ENCODE measurements at regions of chr15 and their contacts with region 1.

Region 1: GRCh38 chr15:95025924-95026728 is 794.8 kb downstream of the MCTP2 start:
- DNase-seq: peak; percentile 42 to 48
- H3K4me3 ChIP-seq: no peak overlapping the region
- H3K4me3 Mint-ChIP-seq: no peak overlapping the region
- H3K27ac Mint-ChIP-seq: no peak overlapping the region
- H3K4me1 ChIP-seq: no peaks in the 10 kb centered on the region
- H3K4me1 Mint-ChIP-seq: no peaks in the 10 kb centered on the region
- H3K27me3 ChIP-seq: no peaks in the 10 kb centered on the region
- H3K27me3 Mint-ChIP-seq: peaks cover 5% of the 10 kb centered on the region
- CTCF ChIP-seq: peak in 1 of 2 experiments; percentile 47

Region 2: GRCh38 chr15:94582369-94582768 is 443.8 kb before region 1 on chr15:
- CTCF ChIA-PET with region 1: no interaction called
- POLR2A ChIA-PET with region 1: no interaction called
- intact Hi-C with region 1: loop called (anchors 10 kb)
- DNase-seq: peak; percentile 38 to 41
- H3K4me3 ChIP-seq: no peak overlapping the region
- H3K4me3 Mint-ChIP-seq: no peak overlapping the region
- H3K27ac Mint-ChIP-seq: no peak overlapping the region
- H3K4me1 ChIP-seq: no peaks in the 10 kb centered on the region
- H3K4me1 Mint-ChIP-seq: no peaks in the 10 kb centered on the region
- H3K27me3 ChIP-seq: no peaks in the 10 kb centered on the region
- H3K27me3 Mint-ChIP-seq: peaks cover 16% of the 10 kb centered on the region
- CTCF ChIP-seq: peak; percentile 35 to 51

Region 3: DNA sequence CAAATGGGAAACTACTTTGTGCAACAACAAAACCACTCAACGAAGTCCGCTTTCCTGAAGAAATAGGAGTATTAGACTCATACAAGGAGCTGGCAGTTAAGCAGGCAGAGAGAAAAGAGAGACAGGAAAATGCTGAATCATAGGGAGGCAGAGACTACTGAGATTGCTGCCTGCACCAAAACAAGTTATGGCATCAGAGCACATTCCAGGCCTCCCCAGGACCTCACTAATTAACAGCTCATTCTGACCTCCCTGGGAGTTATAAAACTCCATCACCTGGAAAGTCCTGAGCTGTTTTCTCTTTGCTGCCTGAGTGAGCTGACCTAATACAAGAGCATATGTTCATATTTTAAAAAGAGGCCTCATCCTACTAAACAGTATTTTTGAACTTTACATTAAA is 53.8 kb before region 1 on chr15:
- CTCF ChIA-PET with region 1: no interaction called
- POLR2A ChIA-PET with region 1: no interaction called
- intact Hi-C with region 1: no loop called
- DNase-seq: no peak
- H3K4me3 ChIP-seq: no peak overlapping the region
- H3K4me3 Mint-ChIP-seq: no peak overlapping the region
- H3K27ac Mint-ChIP-seq: no peak overlapping the region
- H3K4me1 ChIP-seq: no peaks in the 10 kb centered on the region
- H3K4me1 Mint-ChIP-seq: no peaks in the 10 kb centered on the region
- H3K27me3 ChIP-seq: no peaks in the 10 kb centered on the region
- H3K27me3 Mint-ChIP-seq: no peaks in the 10 kb centered on the region
- CTCF ChIP-seq: no peak

Region 4: GRCh38 chr15:95119041-95119610 is 93.0 kb after region 1 on chr15:
- CTCF ChIA-PET with region 1: no interaction called
- POLR2A ChIA-PET with region 1: no interaction called
- intact Hi-C with region 1: loop called (anchors 10 kb)
- DNase-seq: no peak
- H3K4me3 ChIP-seq: no peak overlapping the region
- H3K4me3 Mint-ChIP-seq: no peak overlapping the region
- H3K27ac Mint-ChIP-seq: no peak overlapping the region
- H3K4me1 ChIP-seq: no peaks in the 10 kb centered on the region
- H3K4me1 Mint-ChIP-seq: no peaks in the 10 kb centered on the region
- H3K27me3 ChIP-seq: no peaks in the 10 kb centered on the region
- H3K27me3 Mint-ChIP-seq: no peaks in the 10 kb centered on the region
- CTCF ChIP-seq: no peak